Prostate gland (tissue), 2 donors: ENCODE measurements at regions of chr19 and their contacts with region 1.

Region 1: GRCh38 chr19:14006243-14006765 is at the start of gene RFX1:
- DNase-seq: peak; percentile 99
- H3K4me3 ChIP-seq: peak within 1 kb of the TSS; percentile 94 to 99
- H3K27ac ChIP-seq: peak within 1 kb of the TSS; percentile 99 to 100
- H3K4me1 ChIP-seq: no peaks in the 10 kb centered on the region
- H3K27me3 ChIP-seq: no peaks in the 10 kb centered on the region
- CTCF ChIP-seq: no peak
- POLR2A ChIP-seq: no peak
- total RNA-seq, gene RFX1: 9.2 to 12.7 TPM

Region 2: GRCh38 chr19:13952154-13953035 is 53.9 kb before region 1 on chr19 and contains the start of gene DCAF15:
- intact Hi-C with region 1: loop called (anchors 2 kb)
- DNase-seq: peak; percentile 100
- H3K4me3 ChIP-seq: peak within 1 kb of the TSS; percentile 81 to 95
- H3K27ac ChIP-seq: peak within 1 kb of the TSS; percentile 76 to 82
- H3K4me1 ChIP-seq: peaks cover 6% of the 10 kb centered on the region
- H3K27me3 ChIP-seq: no peaks in the 10 kb centered on the region
- CTCF ChIP-seq: peak in 3 of 4 experiments; percentile 14 to 34 (median 16)
- POLR2A ChIP-seq: peak; percentile 66
- total RNA-seq, gene DCAF15: 18.6 to 47.4 TPM

Region 3: DNA sequence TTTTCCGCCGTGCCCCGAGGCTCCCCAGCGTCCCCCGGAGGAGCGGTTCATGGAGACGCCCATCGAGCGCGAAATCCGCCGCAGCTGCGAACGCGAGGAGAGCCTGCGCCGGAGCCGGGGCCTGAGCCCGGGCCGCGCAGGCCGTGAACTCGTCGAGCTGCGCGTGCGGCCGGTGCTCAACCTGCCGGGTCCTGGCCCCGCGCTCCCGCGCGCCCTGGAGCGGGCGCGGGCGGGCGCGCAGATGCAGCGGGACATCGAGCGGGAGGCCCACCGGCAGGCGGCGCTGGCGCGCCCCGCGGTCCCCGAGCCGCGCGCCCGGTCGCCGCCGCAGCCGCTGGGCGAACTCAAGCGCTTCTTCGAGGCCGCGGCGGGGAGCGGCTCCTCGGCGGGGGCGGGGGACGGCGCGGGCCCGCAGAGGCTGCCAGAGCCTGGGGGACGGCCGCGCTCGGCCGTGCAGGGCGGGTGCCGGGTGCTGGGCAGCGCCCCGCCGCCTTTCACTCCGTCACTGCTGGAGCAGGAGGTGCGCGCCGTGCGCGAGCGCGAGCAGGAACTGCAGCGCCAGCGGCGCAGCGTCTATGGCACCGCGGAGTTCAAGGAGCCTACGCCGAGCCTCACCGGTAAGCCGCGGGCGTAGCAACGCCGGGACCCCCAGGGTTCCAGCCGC is 67.1 kb after region 1 on chr19:
- intact Hi-C with region 1: loop called (anchors 5 kb)
- DNase-seq: peak; percentile 53
- H3K4me3 ChIP-seq: peak overlapping the region; percentile 35 to 66
- H3K27ac ChIP-seq: peak overlapping the region; percentile 76 to 91
- H3K4me1 ChIP-seq: peaks cover 13% of the 10 kb centered on the region
- H3K27me3 ChIP-seq: no peaks in the 10 kb centered on the region
- CTCF ChIP-seq: peak; percentile 13 to 93 (median 63)
- POLR2A ChIP-seq: peak; percentile 57